HEK293 (cell line): ENCODE measurements at regions of chr22 and their contacts with region 1.

Region 1: GRCh38 chr22:36470162-36470993 is 11.1 kb downstream of the TXN2 start:
- H3K4me3 ChIP-seq: no peak overlapping the region
- H3K27ac ChIP-seq: no peak overlapping the region
- H3K4me1 ChIP-seq: peaks cover 14% of the 10 kb centered on the region
- CTCF ChIP-seq: peak; percentile 87

Region 2: GRCh38 chr22:36194971-36195370 is 275.4 kb before region 1 on chr22:
- CTCF ChIA-PET with region 1: interaction called, 10 read pairs
- POLR2A ChIA-PET with region 1: no interaction called
- H3K4me3 ChIP-seq: no peak overlapping the region
- H3K27ac ChIP-seq: no peak overlapping the region
- H3K4me1 ChIP-seq: no peaks in the 10 kb centered on the region
- CTCF ChIP-seq: peak; percentile 73

Region 3: DNA sequence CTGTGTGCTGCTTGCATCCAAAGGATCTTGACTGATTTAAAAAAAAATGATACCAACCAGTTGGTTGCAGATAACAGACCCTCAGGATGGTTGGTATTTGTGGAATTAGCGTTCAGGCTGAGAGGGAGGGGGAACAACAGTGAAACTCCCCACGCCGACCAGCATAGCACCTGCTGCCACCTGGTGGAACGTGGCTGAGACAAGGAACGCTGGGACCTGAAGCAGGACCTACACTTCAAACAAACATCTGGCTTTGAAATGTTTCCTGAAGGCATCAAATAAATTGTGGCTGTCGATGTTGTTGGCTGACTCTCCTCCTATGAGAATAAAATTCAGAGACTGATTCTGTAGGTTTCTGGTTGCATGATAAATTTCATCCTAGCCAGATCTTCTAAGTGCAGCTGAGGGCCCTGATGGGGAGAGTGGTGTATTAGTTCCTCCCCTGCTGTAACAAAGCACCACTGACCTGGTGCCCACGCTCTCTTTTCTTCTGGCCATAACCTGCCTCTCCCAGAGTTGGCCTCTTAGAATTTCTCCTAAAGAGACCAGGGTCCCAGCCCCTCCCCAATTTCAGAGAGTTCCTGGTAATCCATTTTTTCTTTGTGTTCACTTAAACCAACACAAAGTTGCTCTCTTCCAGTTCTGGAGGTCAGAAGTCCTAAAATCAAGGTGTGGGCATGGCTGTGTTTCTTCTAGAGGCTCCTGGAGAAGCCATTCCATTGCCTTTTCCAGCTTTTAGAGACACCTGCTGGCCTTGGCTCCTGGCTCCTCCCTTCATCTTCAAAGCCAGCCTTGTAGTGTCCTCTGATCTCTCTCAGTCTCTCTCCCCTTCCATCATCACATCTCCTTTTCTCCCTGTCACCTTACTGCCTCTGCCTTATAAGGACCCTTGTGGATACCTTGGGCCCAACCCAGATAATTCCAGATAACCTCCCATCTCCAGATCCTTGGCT is 248.3 kb before region 1 on chr22:
- CTCF ChIA-PET with region 1: no interaction called
- POLR2A ChIA-PET with region 1: no interaction called
- H3K4me3 ChIP-seq: no peak overlapping the region
- H3K27ac ChIP-seq: no peak overlapping the region
- H3K4me1 ChIP-seq: no peaks in the 10 kb centered on the region
- CTCF ChIP-seq: peak; percentile 82

Region 4: GRCh38 chr22:36301384-36301828 is 169.0 kb before region 1 on chr22:
- CTCF ChIA-PET with region 1: interaction called, 132 read pairs
- POLR2A ChIA-PET with region 1: interaction called, 5 read pairs
- H3K4me3 ChIP-seq: no peak overlapping the region
- H3K27ac ChIP-seq: no peak overlapping the region
- H3K4me1 ChIP-seq: no peaks in the 10 kb centered on the region
- CTCF ChIP-seq: peak; percentile 81

Region 5: DNA sequence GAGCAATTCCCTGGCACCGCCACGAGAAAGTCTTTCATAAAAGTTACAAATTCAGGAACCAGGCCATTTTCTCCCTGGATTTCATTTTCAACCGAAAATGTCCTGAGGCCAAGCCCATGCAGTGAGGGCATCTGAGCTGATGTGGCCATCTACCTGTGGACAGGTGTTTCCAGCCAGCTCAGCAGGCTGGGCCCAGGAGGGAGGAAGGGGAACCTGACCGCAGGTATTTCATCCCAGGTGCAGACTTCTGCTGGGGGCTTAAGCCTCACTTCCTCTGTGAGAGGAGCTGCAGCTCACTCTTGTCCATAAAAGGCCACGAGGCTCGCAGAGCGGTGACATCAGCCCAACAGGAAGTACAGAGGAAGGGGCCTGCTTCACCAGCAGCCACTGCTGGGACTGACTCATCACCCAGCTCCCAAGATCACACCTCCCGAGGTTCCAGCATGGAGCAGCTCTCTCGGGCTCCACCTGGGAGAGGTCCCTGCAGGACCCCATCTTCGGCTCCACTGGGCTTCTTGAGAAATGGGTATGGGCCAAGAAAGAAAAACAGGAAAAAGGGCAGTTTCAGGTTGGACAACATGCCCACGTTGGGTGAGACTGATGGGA is 139.0 kb before region 1 on chr22:
- CTCF ChIA-PET with region 1: interaction called, 57 read pairs
- POLR2A ChIA-PET with region 1: interaction called, 23 read pairs
- H3K4me3 ChIP-seq: no peak overlapping the region
- H3K27ac ChIP-seq: peak overlapping the region; percentile 85
- H3K4me1 ChIP-seq: peaks cover 48% of the 10 kb centered on the region
- CTCF ChIP-seq: no peak; the same call in 1 of the 2 replicates

Region 6: GRCh38 chr22:36350751-36351594 is 119.4 kb before region 1 on chr22:
- CTCF ChIA-PET with region 1: interaction called, 11 read pairs
- POLR2A ChIA-PET with region 1: no interaction called
- H3K4me3 ChIP-seq: no peak overlapping the region
- H3K27ac ChIP-seq: peak overlapping the region; percentile 4; the same call in 1 of the 2 replicates
- H3K4me1 ChIP-seq: peaks cover 33% of the 10 kb centered on the region
- CTCF ChIP-seq: no peak

Region 7: GRCh38 chr22:36387752-36388518 is 82.4 kb before region 1 on chr22 and contains the start of gene MYH9:
- CTCF ChIA-PET with region 1: interaction called, 11 read pairs
- POLR2A ChIA-PET with region 1: interaction called, 15 read pairs
- H3K4me3 ChIP-seq: peak within 1 kb of the TSS; percentile 94
- H3K27ac ChIP-seq: peak within 1 kb of the TSS; percentile 95
- H3K4me1 ChIP-seq: peaks cover 12% of the 10 kb centered on the region; the same call in 1 of the 2 replicates
- CTCF ChIP-seq: no peak

Region 8: GRCh38 chr22:36481393-36482168 is 11.2 kb after region 1 on chr22 and contains the start of gene TXN2:
- CTCF ChIA-PET with region 1: interaction called, 16 read pairs
- POLR2A ChIA-PET with region 1: interaction called, 15 read pairs
- H3K4me3 ChIP-seq: peak within 1 kb of the TSS; percentile 49
- H3K27ac ChIP-seq: peak within 1 kb of the TSS; percentile 95
- H3K4me1 ChIP-seq: no peaks in the 10 kb centered on the region; the same call in 1 of the 2 replicates
- CTCF ChIP-seq: no peak

Region 9: DNA sequence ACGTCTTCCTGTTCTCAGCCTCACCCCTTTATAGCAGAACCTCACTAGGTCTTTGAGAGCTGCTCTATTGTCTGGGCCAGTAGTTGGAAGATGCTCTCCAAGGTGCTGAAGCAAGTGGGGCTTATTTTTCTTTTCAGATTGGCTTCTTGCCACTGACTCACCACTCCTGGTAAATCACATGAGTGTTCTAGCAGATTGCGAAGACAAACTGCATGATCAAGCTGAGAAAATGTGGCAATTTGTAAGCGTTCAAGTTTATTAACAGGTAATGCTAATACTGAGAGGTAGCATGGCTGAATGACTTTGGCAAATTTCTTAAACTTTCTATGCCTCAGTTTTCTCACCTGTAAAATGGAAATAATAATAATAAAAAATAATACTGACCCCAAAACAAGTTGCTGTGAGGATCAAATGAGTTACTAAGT is 174.0 kb after region 1 on chr22:
- CTCF ChIA-PET with region 1: no interaction called
- POLR2A ChIA-PET with region 1: no interaction called
- H3K4me3 ChIP-seq: no peak overlapping the region
- H3K27ac ChIP-seq: no peak overlapping the region
- H3K4me1 ChIP-seq: 0 out of 2 replicates have a peak, but pooled peaks cover 2% of the 10 kb centered on the region
- CTCF ChIP-seq: no peak